Activated CD4-positive, alpha-beta memory T cell treated with anti-CD3 and anti-CD28 coated beads for 36 hours (primary cell): ENCODE measurements at regions of chr1 and their contacts with region 1.

Region 1: GRCh38 chr1:54944610-54945544 is 35.6 kb upstream of the TMEM61 start:
- DNase-seq: peak; percentile 79
- H3K4me3 Mint-ChIP-seq: no peak overlapping the region
- H3K27ac Mint-ChIP-seq: no peak overlapping the region
- H3K4me1 Mint-ChIP-seq: peaks cover 4% of the 10 kb centered on the region
- H3K27me3 Mint-ChIP-seq: no peaks in the 10 kb centered on the region

Region 2: DNA sequence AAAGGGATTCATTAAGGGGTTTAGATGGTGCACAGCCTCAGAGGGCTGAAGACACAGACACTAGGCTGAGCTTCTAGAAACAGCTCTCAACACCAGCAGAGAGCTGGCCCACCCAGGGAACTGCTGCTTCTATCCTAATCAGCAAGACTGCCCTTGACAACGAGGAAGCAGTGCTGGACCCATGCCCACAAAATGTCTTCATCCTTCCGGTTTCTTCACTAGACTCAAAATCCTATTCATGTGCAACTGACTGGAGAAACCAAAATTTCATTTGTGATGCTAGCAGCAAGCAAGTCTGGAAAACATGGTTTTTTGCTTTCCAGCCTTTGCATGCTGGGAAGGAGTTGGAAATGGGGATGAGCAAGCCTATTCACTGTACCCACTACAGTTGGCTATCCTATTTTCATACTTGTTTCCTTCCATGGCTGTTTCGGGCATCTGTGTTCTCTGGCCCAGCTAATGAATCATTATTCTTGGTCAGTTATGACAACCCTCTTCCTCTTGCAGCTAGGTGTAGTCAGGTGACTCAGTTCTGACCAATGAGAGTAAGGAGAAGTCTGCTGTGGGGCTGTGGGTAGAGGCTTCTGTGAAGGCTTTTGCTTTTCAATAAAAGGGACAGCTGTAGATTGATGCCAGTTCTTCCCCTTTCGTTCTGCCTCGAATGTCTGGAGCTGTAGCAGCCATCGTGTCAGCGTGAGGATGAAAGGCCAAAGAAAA is 20.9 kb after region 1 on chr1:
- CTCF ChIA-PET with region 1: interaction called, 11 read pairs
- POLR2A ChIA-PET with region 1: no interaction called
- intact Hi-C with region 1: no loop called
- DNase-seq: no peak
- H3K4me3 Mint-ChIP-seq: no peak overlapping the region
- H3K27ac Mint-ChIP-seq: no peak overlapping the region
- H3K4me1 Mint-ChIP-seq: peaks cover 8% of the 10 kb centered on the region
- H3K27me3 Mint-ChIP-seq: peaks cover 20% of the 10 kb centered on the region

Region 3: DNA sequence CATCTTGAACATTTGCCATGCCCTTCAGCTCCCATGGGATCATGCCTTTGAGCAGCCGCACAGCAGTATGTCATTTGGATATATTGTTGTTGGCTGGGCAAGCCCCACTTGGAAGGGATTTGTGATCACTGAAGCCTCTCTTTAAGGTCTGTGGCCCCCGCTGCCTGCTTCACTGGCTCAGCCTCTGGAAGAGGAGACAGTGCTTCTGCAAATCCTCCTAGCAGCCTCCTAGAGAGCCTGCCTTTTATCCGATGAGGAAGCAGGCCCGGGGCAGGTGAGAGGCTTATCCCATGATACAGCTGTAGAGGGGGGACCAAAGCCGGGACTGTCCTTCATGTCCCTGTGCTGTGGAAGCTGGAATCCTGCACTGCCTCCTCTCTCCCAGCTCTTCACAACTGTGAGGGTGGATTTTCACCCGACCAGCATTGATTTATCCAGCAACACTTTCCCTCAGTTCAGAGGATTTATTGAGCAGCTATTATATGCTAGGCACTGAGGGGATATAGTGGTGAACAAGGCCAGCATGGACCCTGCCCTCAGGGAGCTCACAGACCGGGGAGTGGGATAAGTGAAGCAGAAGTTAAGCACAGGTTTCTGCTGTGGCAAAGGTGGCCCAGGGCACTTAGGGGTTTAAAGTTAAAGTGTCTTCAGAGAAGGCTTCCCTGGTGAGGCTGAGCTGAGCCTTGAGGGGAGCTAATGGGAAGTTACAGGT is 39.4 kb after region 1 on chr1:
- CTCF ChIA-PET with region 1: interaction called, 17 read pairs
- POLR2A ChIA-PET with region 1: no interaction called
- intact Hi-C with region 1: no loop called
- DNase-seq: no peak
- H3K4me3 Mint-ChIP-seq: no peak overlapping the region
- H3K27ac Mint-ChIP-seq: no peak overlapping the region
- H3K4me1 Mint-ChIP-seq: no peaks in the 10 kb centered on the region
- H3K27me3 Mint-ChIP-seq: peaks cover 27% of the 10 kb centered on the region

Region 4: GRCh38 chr1:55007625-55008024 is 62.7 kb after region 1 on chr1:
- CTCF ChIA-PET with region 1: interaction called, 10 read pairs
- POLR2A ChIA-PET with region 1: no interaction called
- intact Hi-C with region 1: no loop called
- DNase-seq: no peak
- H3K4me3 Mint-ChIP-seq: no peak overlapping the region
- H3K27ac Mint-ChIP-seq: no peak overlapping the region
- H3K4me1 Mint-ChIP-seq: no peaks in the 10 kb centered on the region
- H3K27me3 Mint-ChIP-seq: no peaks in the 10 kb centered on the region